HCT116 (cell line): ENCODE measurements at regions of chr19 and their contacts with region 1.

Region 1: GRCh38 chr19:13861732-13862531 is 15.0 kb upstream of the NANOS3 start:
- DNase-seq: no peak
- ATAC-seq: peak; percentile 79
- H3K4me3 ChIP-seq: peak overlapping the region; percentile 40 to 55
- H3K27ac ChIP-seq: peak overlapping the region; percentile 83
- H3K4me1 ChIP-seq: peaks cover 37 to 67% of the 10 kb centered on the region in 2 experiments
- H3K27me3 ChIP-seq: no peaks in the 10 kb centered on the region
- CTCF ChIP-seq: peak; percentile 82 to 92 (median 90)
- POLR2A ChIP-seq: no peak
- RAD21 ChIP-seq: peak; percentile 98

Region 2: DNA sequence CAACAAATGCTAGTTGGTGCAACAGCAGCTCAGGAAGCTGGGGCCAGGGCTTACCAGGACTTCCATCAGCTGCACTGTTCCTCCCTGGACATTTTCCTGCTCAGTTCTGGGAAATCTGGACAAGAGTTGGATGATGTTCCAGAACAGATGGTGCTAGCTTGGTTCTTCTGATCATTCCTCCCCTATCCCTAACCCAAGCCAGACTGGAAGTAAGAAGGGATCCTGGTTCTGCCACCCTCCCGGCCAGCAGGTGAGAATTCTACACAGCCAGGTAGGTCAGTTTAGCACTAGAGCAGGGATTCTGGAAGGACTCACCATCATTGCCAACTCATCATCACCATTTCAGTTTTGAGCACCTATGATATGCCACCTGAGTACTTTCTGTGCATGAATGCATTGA is 385.9 kb before region 1 on chr19:
- CTCF ChIA-PET with region 1: no interaction called
- POLR2A ChIA-PET with region 1: no interaction called
- RAD21 ChIA-PET with region 1: no interaction called
- intact Hi-C with region 1: no loop called
- DNase-seq: no peak
- ATAC-seq: no peak
- H3K4me3 ChIP-seq: no peak overlapping the region
- H3K27ac ChIP-seq: no peak overlapping the region
- H3K4me1 ChIP-seq: no peaks in the 10 kb centered on the region
- H3K27me3 ChIP-seq: peaks cover 62% of the 10 kb centered on the region
- CTCF ChIP-seq: no peak
- POLR2A ChIP-seq: no peak
- RAD21 ChIP-seq: no peak

Region 3: GRCh38 chr19:13718733-13719132 is 143.2 kb before region 1 on chr19:
- CTCF ChIA-PET with region 1: interaction called, 10 read pairs
- POLR2A ChIA-PET with region 1: no interaction called
- RAD21 ChIA-PET with region 1: no interaction called
- intact Hi-C with region 1: no loop called
- DNase-seq: no peak
- ATAC-seq: no peak; the same call in 1 of the 2 replicates
- H3K4me3 ChIP-seq: no peak overlapping the region
- H3K27ac ChIP-seq: no peak overlapping the region
- H3K4me1 ChIP-seq: peaks cover 0 to 7% of the 10 kb centered on the region in 2 experiments; a peak in 3 of 4 replicates
- H3K27me3 ChIP-seq: no peaks in the 10 kb centered on the region
- CTCF ChIP-seq: 0 out of 6 replicates have a peak, but pooled peaks of 1 of the 3 experiments have one; percentile 8
- POLR2A ChIP-seq: no peak
- RAD21 ChIP-seq: peak; percentile 47

Region 4: GRCh38 chr19:13794757-13795589 is 67.0 kb before region 1 on chr19 and contains the start of gene ZSWIM4:
- CTCF ChIA-PET with region 1: interaction called, 15 read pairs
- POLR2A ChIA-PET with region 1: interaction called, 4 read pairs
- RAD21 ChIA-PET with region 1: interaction called, 4 to 6 read pairs
- intact Hi-C with region 1: no loop called
- DNase-seq: peak; percentile 98
- ATAC-seq: peak; percentile 93
- H3K4me3 ChIP-seq: peak within 1 kb of the TSS; percentile 74 to 76
- H3K27ac ChIP-seq: peak within 1 kb of the TSS; percentile 94
- H3K4me1 ChIP-seq: peaks cover 37 to 56% of the 10 kb centered on the region in 2 experiments
- H3K27me3 ChIP-seq: no peaks in the 10 kb centered on the region
- CTCF ChIP-seq: no peak
- POLR2A ChIP-seq: no peak
- RAD21 ChIP-seq: no peak
- total RNA-seq, gene ZSWIM4: 9.8 TPM

Region 5: GRCh38 chr19:13839130-13839937 is 22.6 kb before region 1 on chr19:
- CTCF ChIA-PET with region 1: interaction called, 14 read pairs
- POLR2A ChIA-PET with region 1: interaction called, 29 read pairs
- RAD21 ChIA-PET with region 1: interaction called, 3 to 6 read pairs
- intact Hi-C with region 1: loop called (anchors 1 kb)
- DNase-seq: no peak
- ATAC-seq: peak; percentile 9
- H3K4me3 ChIP-seq: peak overlapping the region; percentile 84 to 91
- H3K27ac ChIP-seq: peak overlapping the region; percentile 96
- H3K4me1 ChIP-seq: peaks cover 54 to 87% of the 10 kb centered on the region in 2 experiments
- H3K27me3 ChIP-seq: no peaks in the 10 kb centered on the region
- CTCF ChIP-seq: 0 out of 6 replicates have a peak, but pooled peaks of 1 of the 3 experiments have one; percentile 3
- POLR2A ChIP-seq: no peak
- RAD21 ChIP-seq: no peak

Region 6: GRCh38 chr19:13872695-13873389 is 10.9 kb after region 1 on chr19:
- CTCF ChIA-PET with region 1: interaction called, 17 read pairs
- POLR2A ChIA-PET with region 1: interaction called, 7 read pairs
- RAD21 ChIA-PET with region 1: interaction called, 3 to 4 read pairs
- intact Hi-C with region 1: no loop called
- DNase-seq: no peak
- ATAC-seq: peak; percentile 91
- H3K4me3 ChIP-seq: peak overlapping the region; percentile 45 to 58
- H3K27ac ChIP-seq: peak overlapping the region; percentile 48; the same call in 1 of the 2 replicates
- H3K4me1 ChIP-seq: peaks cover 19 to 26% of the 10 kb centered on the region in 2 experiments
- H3K27me3 ChIP-seq: no peaks in the 10 kb centered on the region
- CTCF ChIP-seq: peak in 2 of 3 experiments; percentile 31 to 52; a peak in 3 of 6 replicates
- POLR2A ChIP-seq: no peak
- RAD21 ChIP-seq: no peak; the same call in none of the 2 replicates